IMR-90 (cell line): ENCODE measurements at regions of chr11 and their contacts with region 1.

Region 1: GRCh38 chr11:67406969-67407687 is 3.2 kb downstream of the TBC1D10C start:
- DNase-seq: no peak
- ATAC-seq: peak; percentile 25; the same call in 1 of the 2 replicates
- H3K4me3 ChIP-seq: no peak overlapping the region
- H3K27ac ChIP-seq: no peak overlapping the region
- H3K4me1 ChIP-seq: peaks cover under 1% of the 10 kb centered on the region; the same call in 1 of the 2 replicates
- H3K27me3 ChIP-seq: peaks cover 44% of the 10 kb centered on the region
- CTCF ChIP-seq: no peak
- POLR2A ChIP-seq: no peak
- RAD21 ChIP-seq: no peak

Region 2: DNA sequence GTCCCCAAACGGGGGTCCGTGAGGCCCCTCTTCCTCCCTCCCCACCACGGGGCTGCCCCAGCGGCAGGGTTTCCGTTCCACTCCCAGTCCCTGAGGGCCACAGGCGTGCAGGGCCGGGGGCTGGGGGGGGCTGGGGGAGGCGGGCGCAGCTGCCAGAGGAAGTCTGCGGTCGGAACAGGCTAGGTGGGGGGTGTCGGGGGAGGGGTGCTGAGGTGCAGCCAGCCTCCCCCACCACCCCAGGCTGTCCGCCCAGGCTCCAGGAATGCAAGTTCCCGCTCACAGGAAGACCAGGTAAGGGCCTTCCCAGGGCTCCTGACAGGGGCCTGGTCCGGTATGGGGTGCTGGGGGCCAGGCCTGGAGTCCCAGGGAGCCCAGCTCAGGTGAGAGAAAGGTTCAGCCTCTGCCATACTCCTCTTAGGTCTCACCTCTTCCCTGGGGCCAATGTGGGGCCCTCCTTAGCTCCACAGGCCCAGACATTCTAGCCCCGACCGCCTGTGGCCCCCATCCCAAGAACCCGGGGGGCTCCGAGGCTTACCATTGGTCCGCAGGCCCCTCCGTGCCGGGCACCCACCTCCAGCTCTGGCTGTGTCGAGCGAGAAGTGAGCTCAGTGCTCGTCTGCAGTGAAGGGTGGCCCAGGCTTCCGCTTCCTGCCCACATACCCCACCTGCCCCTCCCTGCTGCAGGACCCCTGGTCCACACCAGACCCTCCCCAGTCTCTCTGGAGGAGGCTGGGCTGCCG is 30.1 kb after region 1 on chr11 and contains the start of gene PTPRCAP:
- CTCF ChIA-PET with region 1: no interaction called
- POLR2A ChIA-PET with region 1: interaction called, 12 read pairs
- dilution Hi-C with region 1: no loop called
- in situ Hi-C with region 1: no loop called
- intact Hi-C with region 1: no loop called
- DNase-seq: no peak
- ATAC-seq: no peak
- H3K4me3 ChIP-seq: no peak within 1 kb of the TSS
- H3K27ac ChIP-seq: no peak within 1 kb of the TSS
- H3K4me1 ChIP-seq: no peaks in the 10 kb centered on the region
- H3K27me3 ChIP-seq: no peaks in the 10 kb centered on the region
- CTCF ChIP-seq: no peak
- POLR2A ChIP-seq: no peak
- RAD21 ChIP-seq: no peak
- total RNA-seq, gene PTPRCAP: not detected in 2 replicates